GM10248 (cell line): ENCODE measurements at regions of chr2 and their contacts with region 1.

Region 1: DNA sequence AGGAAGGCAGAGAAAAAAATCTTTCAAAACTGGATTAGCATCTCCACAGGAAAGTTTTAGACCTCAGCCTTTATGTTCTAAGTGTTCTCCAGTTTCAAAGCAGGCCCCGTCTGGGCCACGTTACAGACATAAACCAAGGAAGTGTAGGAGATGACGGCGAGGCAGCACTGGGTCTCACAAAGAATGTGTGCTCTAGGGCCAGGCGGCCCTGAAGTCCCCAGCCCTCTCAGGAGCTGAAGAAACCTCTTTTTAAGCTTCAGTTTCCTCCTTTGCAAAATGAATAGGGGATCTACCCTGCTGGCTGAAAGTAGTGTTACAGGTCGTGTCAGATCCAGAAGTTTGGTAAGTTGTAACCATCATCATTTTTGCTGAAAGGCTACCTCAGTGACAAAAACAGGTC is 81.7 kb downstream of the SPRED2 start:
- DNase-seq: peak; percentile 49
- CTCF ChIP-seq: peak; percentile 18

Region 2: DNA sequence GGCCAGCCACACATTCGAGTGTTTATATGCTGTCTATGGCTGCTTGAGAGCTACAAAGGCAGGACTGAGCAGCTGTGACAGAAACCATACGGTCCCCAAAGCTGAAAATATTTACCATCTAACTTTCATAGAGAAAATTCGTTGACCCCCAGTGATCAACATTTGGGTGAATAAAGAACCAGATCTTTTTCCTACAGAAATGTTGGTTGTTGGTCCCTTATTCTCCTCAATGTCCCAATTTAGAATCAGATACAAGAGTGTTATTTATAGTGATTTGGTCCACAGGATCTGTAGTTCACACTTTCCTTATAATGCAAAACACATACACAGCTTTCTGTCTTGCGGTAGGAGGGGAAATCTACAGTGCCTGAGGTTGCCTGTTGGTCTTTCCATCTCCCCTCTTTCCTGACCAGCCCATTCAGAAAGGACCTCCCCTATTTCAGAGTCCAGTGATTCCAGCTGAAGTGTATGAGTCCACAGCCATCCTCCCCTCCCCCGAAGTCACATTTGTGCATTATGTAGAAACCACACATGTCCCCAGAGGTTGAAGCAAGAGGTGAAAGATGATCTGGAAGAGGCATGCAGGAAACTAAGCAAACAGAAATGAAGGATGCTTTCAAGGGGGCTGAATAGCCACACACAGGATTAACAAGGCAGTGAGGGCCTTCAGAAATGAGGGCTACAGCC is 19.8 kb after region 1 on chr2:
- CTCF ChIA-PET with region 1: interaction called, 38 read pairs
- POLR2A ChIA-PET with region 1: no interaction called
- DNase-seq: no peak
- CTCF ChIP-seq: no peak

Region 3: DNA sequence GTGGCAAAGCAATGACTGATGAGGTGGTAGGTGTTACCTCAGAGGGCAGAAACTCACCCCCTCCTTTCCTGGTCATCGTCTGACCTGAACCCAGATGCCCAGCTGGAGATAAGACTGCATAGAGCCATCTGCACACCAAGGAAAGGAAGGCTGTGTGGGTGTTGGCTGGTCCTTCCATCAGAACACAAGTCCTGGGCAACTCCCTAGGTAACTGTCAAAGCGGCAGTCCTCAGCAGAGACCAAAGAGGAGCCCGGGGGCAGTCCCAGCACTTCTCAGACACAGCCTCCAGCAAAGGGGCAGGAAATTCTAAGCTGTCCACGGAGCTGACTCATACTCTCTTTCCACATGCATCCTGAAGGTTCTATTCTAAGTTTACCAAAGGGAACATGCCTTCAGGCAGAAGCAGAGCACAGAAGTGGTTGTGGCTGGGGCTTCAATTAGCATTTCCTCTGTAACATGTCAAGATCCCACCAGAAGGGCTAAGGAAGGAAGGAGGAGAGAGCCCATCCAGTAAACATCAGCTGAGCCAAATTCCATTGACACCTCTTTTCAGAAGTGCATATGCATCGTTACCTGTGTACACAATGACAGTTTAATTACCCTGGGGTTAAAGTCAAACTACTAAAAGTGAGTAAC is 27.0 kb after region 1 on chr2:
- CTCF ChIA-PET with region 1: interaction called, 38 read pairs
- POLR2A ChIA-PET with region 1: no interaction called
- DNase-seq: no peak
- CTCF ChIP-seq: no peak